ENCODE measurements at regions of chr7 and their contacts with region 1.

Region 1: DNA sequence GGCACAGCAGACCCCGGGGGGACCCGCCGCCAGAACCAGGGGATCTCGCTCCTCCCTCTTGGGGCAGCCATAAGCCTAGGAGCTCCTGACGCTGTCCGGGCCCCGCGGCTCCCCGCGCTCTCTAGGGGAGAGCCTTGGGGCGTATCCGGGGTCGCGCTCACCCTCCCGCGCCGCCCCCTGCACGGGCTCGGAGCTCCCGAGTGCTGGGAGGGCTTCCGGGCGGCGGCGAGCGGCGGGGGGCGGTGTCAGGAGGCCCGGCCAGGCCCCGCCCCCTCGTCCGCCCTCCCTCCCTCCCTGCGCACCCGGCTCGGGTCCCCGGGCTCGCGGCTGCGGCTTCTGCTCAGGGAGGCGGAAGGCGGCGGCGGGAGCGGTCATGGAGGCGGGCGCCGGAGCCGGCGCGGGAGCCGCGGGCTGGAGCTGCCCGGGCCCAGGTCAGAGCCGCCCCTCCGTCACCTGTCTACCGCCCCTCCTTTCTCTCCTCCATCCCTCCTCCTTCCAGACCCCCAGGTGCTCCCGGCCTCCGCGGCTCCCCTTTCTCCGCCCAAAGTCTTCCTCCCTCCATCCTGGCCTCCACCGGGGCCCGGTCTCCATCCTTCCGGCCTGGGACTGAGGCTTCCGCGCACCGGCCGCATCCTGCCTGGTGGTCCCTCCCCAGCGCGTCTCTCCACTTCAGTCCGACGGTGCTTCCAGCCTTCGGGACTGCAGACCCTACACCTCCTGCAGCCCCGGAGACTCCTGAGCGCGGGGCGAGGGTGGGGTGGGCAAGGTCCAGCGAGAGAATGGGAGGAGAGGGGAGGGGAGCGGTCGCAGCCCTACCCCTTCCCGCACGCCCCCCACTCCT is 427 bp upstream of the CCDC136 start:
- DNase-seq: peak; percentile 89
- H3K4me3 ChIP-seq: peak overlapping the region; percentile 68 to 88 (median 80)
- H3K27ac ChIP-seq: peak overlapping the region; percentile 78 to 90 (median 84)
- H3K4me1 ChIP-seq: peaks cover 0 to 41% (median 25%) of the 10 kb centered on the region in 4 donors
- H3K27me3 ChIP-seq: no peaks in the 10 kb centered on the region
- CTCF ChIP-seq: no peak
- EP300 ChIP-seq: no peak
- POLR2A ChIP-seq: peak in 1 of 2 donors; percentile 21

Region 2: GRCh38 chr7:128692623-128693270 is 98.6 kb before region 1 on chr7:
- intact Hi-C with region 1: no loop called
- DNase-seq: no peak
- H3K4me3 ChIP-seq: no peak overlapping the region
- H3K27ac ChIP-seq: no peak overlapping the region
- H3K4me1 ChIP-seq: peaks cover 0 to 8% (median 7%) of the 10 kb centered on the region in 4 donors
- H3K27me3 ChIP-seq: peaks cover 8 to 23% (median 14%) of the 10 kb centered on the region in 3 donors
- CTCF ChIP-seq: no peak
- EP300 ChIP-seq: no peak
- POLR2A ChIP-seq: no peak

Region 3: GRCh38 chr7:128739048-128739962 is 52.0 kb before region 1 on chr7 and contains the start of gene CALU:
- intact Hi-C with region 1: loop called (anchors 5 kb)
- DNase-seq: peak; percentile 99
- H3K4me3 ChIP-seq: peak within 1 kb of the TSS; percentile 79 to 96 (median 94)
- H3K27ac ChIP-seq: peak within 1 kb of the TSS; percentile 93 to 99 (median 96)
- H3K4me1 ChIP-seq: peaks cover 3 to 50% (median 40%) of the 10 kb centered on the region in 4 donors
- H3K27me3 ChIP-seq: no peaks in the 10 kb centered on the region
- CTCF ChIP-seq: no peak
- EP300 ChIP-seq: peak in 1 of 4 donors; percentile 43
- POLR2A ChIP-seq: peak; percentile 80 to 95
- total RNA-seq, gene CALU: 153 to 250 (median 198) TPM

Region 4: DNA sequence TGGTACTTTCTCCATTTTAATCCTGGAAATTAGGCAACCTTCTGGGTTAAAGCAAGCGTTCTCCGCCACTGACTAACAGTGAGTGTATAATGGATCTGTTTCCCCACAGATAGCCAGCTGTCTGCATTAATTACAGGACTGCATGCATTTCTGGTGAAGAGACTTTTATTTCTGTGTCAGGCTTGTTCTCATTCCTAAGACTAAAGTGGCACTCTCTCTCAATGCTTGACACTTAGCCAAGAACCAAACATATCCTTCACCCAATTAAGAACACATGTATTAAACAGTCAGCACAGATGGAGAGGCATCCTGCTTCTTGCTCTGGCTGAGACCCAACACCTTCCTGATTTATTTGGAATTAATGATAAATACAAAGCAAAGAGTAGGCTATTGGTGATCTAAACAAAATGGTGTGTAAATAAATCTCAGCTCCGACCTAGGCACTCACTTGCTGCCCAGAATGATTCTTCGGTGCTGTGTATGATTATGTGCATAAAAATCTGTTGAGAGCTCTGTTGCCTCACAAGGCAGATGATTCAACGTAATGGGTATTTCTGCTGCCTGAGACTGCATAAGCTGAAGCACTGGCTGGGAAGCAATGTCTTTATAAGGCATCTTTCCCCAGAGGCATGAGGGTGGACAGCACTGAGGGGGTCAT is 35.4 kb before region 1 on chr7:
- intact Hi-C with region 1: loop called (anchors 5 kb)
- DNase-seq: peak; percentile 87
- H3K4me3 ChIP-seq: no peak overlapping the region
- H3K27ac ChIP-seq: peak overlapping the region; percentile 84 to 93 (median 91)
- H3K4me1 ChIP-seq: peaks cover 0 to 41% (median 34%) of the 10 kb centered on the region in 4 donors
- H3K27me3 ChIP-seq: no peaks in the 10 kb centered on the region
- CTCF ChIP-seq: no peak
- EP300 ChIP-seq: peak in 3 of 4 donors; percentile 79 to 97 (median 84)
- POLR2A ChIP-seq: no peak

Region 5: DNA sequence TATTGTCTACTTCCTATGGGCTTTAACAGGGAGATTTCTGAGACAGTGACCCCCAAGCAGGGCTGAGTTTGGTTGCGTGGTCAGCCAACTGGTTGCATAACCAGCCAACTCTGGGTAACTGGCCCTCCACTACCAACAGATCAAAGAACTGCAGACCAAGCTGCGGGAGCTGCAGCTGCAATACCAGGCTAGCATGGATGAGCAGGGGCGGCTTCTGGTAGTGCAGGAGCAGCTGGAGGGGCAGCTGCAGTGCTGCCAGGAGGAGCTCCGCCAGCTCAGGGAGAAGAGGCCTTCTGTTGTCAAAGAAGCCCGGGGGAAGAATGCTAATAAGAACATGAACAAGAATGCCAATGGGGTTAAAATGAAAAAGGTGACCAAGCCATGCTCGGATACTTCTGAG is 23.2 kb after region 1 on chr7:
- intact Hi-C with region 1: no loop called
- DNase-seq: no peak
- H3K4me3 ChIP-seq: no peak overlapping the region
- H3K27ac ChIP-seq: no peak overlapping the region
- H3K4me1 ChIP-seq: peaks cover 0 to 20% (median 16%) of the 10 kb centered on the region in 4 donors
- H3K27me3 ChIP-seq: no peaks in the 10 kb centered on the region
- CTCF ChIP-seq: no peak
- EP300 ChIP-seq: no peak
- POLR2A ChIP-seq: no peak

Region 6: GRCh38 chr7:128830231-128831177 is 39.2 kb after region 1 on chr7 and contains the start of gene FLNC:
- intact Hi-C with region 1: loop called (anchors 2 kb)
- DNase-seq: peak; percentile 87
- H3K4me3 ChIP-seq: peak within 1 kb of the TSS; percentile 66 to 90 (median 83)
- H3K27ac ChIP-seq: peak within 1 kb of the TSS; percentile 95 to 99 (median 98)
- H3K4me1 ChIP-seq: peaks cover 2 to 79% (median 67%) of the 10 kb centered on the region in 4 donors
- H3K27me3 ChIP-seq: no peaks in the 10 kb centered on the region
- CTCF ChIP-seq: no peak
- EP300 ChIP-seq: no peak
- POLR2A ChIP-seq: peak; percentile 72 to 78
- total RNA-seq, gene FLNC: 95.3 to 489 (median 242) TPM

Region 7: DNA sequence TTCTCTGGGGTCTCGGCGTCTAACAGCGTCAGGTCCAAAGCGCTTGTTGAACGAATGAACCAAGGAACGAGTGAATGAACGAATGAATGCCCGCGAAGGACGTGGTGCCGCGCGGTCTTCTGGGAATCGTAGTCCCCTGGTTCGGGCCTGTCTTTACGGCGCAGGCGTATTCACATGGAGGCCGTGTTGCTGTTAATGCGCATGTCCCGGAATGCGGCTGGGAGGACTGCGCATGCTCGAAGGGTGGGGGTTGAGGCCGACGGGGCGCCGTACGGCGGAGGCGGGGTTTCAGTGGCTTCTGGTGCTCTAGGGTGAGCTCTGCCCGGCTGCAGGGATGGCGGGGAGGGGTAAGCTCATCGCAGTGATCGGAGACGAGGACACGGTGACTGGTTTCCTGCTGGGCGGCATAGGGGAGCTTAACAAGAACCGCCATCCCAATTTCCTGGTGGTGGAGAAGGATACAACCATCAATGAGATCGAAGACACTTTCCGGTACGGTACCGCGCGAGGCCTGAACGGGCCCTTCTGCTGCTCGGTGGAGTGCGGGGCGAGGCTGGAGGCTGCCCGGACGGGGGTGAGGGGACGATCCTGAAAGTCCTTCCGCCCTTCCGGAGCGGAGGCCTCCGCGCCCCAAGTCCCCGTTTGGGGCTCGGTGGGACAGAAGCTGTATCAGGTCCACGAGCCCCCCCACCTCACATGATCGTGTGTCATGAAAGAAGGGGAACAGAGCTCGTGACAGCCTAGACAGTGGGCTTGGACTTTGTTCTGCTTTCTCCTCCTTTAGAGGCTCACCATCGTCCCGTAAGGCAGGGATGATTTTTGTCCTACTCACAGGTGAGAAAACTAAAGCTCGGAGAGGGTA is 71.5 kb after region 1 on chr7 and contains the start of gene ATP6V1F:
- intact Hi-C with region 1: loop called (anchors 5 kb)
- DNase-seq: peak; percentile 99
- H3K4me3 ChIP-seq: peak within 1 kb of the TSS; percentile 77 to 91 (median 82)
- H3K27ac ChIP-seq: peak within 1 kb of the TSS; percentile 81 to 90 (median 85)
- H3K4me1 ChIP-seq: peaks cover 0 to 48% (median 45%) of the 10 kb centered on the region in 4 donors
- H3K27me3 ChIP-seq: no peaks in the 10 kb centered on the region
- CTCF ChIP-seq: peak in 1 of 4 experiments; percentile 18
- EP300 ChIP-seq: peak in 1 of 4 donors; percentile 39
- POLR2A ChIP-seq: peak; percentile 75 to 78
- total RNA-seq, gene ATP6V1F: 96.7 to 138 (median 131) TPM

Measured in sigmoid colon (tissue), 7 donors.